ENCODE measurements at regions of chr22 and their contacts with region 1.

Region 1: DNA sequence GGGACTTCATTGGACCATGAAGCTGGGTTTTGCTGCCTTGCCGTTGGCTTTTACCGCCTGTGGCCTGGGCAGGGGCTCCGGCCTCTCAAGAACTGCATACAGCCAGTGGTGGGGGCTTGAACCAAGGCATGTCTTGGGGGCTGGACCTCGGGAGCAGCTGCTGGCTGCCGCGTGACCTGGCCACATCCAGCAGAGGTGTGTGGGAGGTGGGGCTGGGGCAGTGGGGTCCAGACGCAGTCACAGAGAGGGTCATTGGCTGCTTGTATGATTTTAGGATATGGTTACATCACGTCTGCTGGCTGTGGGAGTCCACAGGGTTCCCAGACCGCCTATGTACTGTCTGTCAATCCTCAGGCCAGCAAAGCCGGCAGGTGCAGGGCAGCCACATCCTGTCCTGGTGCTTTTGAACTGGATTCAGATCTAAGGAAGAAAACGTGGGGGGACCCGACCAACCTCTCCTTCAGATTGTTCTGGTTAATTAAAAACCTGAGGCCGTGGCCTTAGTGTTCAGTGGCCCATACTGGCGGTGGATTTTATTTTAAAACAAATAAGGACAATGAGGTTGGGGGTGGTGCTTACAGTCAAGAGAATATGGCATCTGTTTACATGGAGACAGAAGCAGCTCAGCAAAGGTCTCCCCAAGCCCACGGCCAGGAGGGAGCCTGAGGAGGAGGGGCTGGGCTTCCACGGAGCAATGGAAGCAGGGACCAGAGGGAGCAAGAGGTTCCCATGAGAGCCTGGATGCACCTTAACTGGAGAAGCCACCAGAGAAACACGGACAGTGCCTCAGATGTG is 426.0 kb downstream of the TBC1D22A start:
- DNase-seq: no peak
- ATAC-seq: peak; percentile 38; the same call in 2 of the 3 replicates
- H3K4me3 ChIP-seq: no peak overlapping the region
- H3K27ac ChIP-seq: no peak overlapping the region
- H3K4me1 ChIP-seq: peaks cover 20% of the 10 kb centered on the region
- H3K27me3 ChIP-seq: peaks cover 1 to 2% of the 10 kb centered on the region in 2 experiments; a peak in 3 of 5 replicates
- CTCF ChIP-seq: no peak
- EP300 ChIP-seq: no peak
- POLR2A ChIP-seq: no peak
- RAD21 ChIP-seq: no peak

Region 2: GRCh38 chr22:47107431-47107830 is 81.0 kb before region 1 on chr22:
- CTCF ChIA-PET with region 1: no interaction called
- POLR2A ChIA-PET with region 1: no interaction called
- in situ Hi-C with region 1: no loop called
- intact Hi-C with region 1: loop called (anchors 10 kb)
- DNase-seq: no peak
- ATAC-seq: no peak
- H3K4me3 ChIP-seq: no peak overlapping the region
- H3K27ac ChIP-seq: no peak overlapping the region
- H3K4me1 ChIP-seq: peaks cover 24% of the 10 kb centered on the region
- H3K27me3 ChIP-seq: no peaks in the 10 kb centered on the region
- CTCF ChIP-seq: no peak
- EP300 ChIP-seq: no peak
- POLR2A ChIP-seq: no peak
- RAD21 ChIP-seq: no peak

Measured in HepG2 (cell line).